ENCODE measurements at regions of chr7 and their contacts with region 1.

Region 1: GRCh38 chr7:53119514-53119941 is 84.1 kb downstream of the POM121L12 start:
- DNase-seq: peak; percentile 99
- H3K4me3 ChIP-seq: no peak overlapping the region
- H3K27ac ChIP-seq: peak overlapping the region; percentile 95
- H3K4me1 ChIP-seq: peaks cover 27% of the 10 kb centered on the region
- H3K27me3 ChIP-seq: no peaks in the 10 kb centered on the region
- CTCF ChIP-seq: no peak
- POLR2A ChIP-seq: no peak

Region 2: GRCh38 chr7:52648872-52649271 is 470.7 kb before region 1 on chr7:
- CTCF ChIA-PET with region 1: no interaction called
- POLR2A ChIA-PET with region 1: no interaction called
- dilution Hi-C with region 1: no loop called
- intact Hi-C with region 1: no loop called
- DNase-seq: no peak
- H3K4me3 ChIP-seq: no peak overlapping the region
- H3K27ac ChIP-seq: no peak overlapping the region
- H3K4me1 ChIP-seq: no peaks in the 10 kb centered on the region
- H3K27me3 ChIP-seq: no peaks in the 10 kb centered on the region
- CTCF ChIP-seq: no peak
- POLR2A ChIP-seq: no peak

Region 3: GRCh38 chr7:52838981-52839411 is 280.5 kb before region 1 on chr7:
- CTCF ChIA-PET with region 1: interaction called, 3 read pairs
- POLR2A ChIA-PET with region 1: no interaction called
- dilution Hi-C with region 1: no loop called
- intact Hi-C with region 1: loop called (anchors 1 kb)
- DNase-seq: peak; percentile 94
- H3K4me3 ChIP-seq: peak overlapping the region in 1 of 3 experiments; percentile 35
- H3K27ac ChIP-seq: peak overlapping the region; percentile 93
- H3K4me1 ChIP-seq: peaks cover 20% of the 10 kb centered on the region
- H3K27me3 ChIP-seq: no peaks in the 10 kb centered on the region
- CTCF ChIP-seq: no peak
- POLR2A ChIP-seq: no peak

Region 4: GRCh38 chr7:52959336-52959735 is 160.2 kb before region 1 on chr7:
- CTCF ChIA-PET with region 1: no interaction called
- POLR2A ChIA-PET with region 1: no interaction called
- dilution Hi-C with region 1: no loop called
- intact Hi-C with region 1: loop called (anchors 1 kb)
- DNase-seq: peak; percentile 25
- H3K4me3 ChIP-seq: no peak overlapping the region
- H3K27ac ChIP-seq: peak overlapping the region; percentile 32
- H3K4me1 ChIP-seq: peaks cover 39% of the 10 kb centered on the region
- H3K27me3 ChIP-seq: no peaks in the 10 kb centered on the region
- CTCF ChIP-seq: no peak
- POLR2A ChIP-seq: no peak

Region 5: DNA sequence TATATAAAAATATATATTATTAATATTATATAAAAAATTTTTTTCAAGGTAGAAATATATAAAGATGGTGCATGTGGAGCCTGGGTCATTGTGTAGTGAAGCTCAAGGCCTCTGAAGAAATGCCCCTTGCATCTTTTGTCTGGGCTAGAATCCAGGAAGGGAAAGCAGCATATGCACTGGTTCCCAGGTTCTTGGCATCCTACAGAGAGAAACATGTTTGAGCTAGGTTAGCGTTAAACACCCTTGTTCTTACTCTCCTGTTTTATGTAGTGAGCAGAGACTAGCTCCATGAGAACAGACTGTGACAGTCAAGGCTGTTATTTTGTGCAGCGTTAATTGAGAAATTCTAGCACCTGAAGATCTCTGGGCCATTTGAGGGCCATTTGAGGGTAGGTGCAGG is 32.0 kb after region 1 on chr7:
- CTCF ChIA-PET with region 1: no interaction called
- POLR2A ChIA-PET with region 1: no interaction called
- dilution Hi-C with region 1: no loop called
- intact Hi-C with region 1: no loop called
- DNase-seq: no peak
- H3K4me3 ChIP-seq: no peak overlapping the region
- H3K27ac ChIP-seq: no peak overlapping the region
- H3K4me1 ChIP-seq: no peaks in the 10 kb centered on the region
- H3K27me3 ChIP-seq: no peaks in the 10 kb centered on the region
- CTCF ChIP-seq: no peak
- POLR2A ChIP-seq: no peak

Region 6: DNA sequence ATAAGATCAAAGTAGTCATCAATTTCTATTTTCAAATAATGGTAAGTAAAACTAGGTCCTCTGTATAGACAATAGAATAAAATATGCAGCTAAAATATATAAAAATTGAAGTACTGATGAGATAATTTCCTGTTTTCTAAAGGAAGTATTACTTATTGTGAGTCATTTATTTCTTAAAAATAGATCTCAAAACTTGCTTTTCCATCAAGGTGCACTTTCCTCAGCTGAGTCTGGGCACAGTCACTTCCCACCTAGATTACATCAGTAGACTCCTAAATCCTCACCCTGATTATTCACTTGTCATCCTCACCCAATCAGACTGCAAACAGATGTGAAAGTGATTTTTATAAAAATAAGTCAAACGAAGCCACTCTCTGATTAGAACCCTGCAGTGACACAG is 127.4 kb after region 1 on chr7:
- CTCF ChIA-PET with region 1: no interaction called
- POLR2A ChIA-PET with region 1: no interaction called
- dilution Hi-C with region 1: no loop called
- intact Hi-C with region 1: loop called (anchors 1 kb)
- DNase-seq: peak; percentile 63
- H3K4me3 ChIP-seq: no peak overlapping the region
- H3K27ac ChIP-seq: peak overlapping the region; percentile 19
- H3K4me1 ChIP-seq: peaks cover 8% of the 10 kb centered on the region
- H3K27me3 ChIP-seq: no peaks in the 10 kb centered on the region
- CTCF ChIP-seq: no peak
- POLR2A ChIP-seq: no peak

Measured in endothelial cell of umbilical vein (primary cell).